Posterior vena cava (tissue), 2 donors: ENCODE measurements at regions of chr3 and their contacts with region 1.

Region 1: GRCh38 chr3:142578327-142579223 is at the start of gene ATR:
- DNase-seq: peak; percentile 99
- total RNA-seq, gene ATR: 20.2 to 20.3 TPM

Region 2: GRCh38 chr3:142716102-142716501 is 137.5 kb after region 1 on chr3:
- intact Hi-C with region 1: no loop called
- DNase-seq: no peak

Region 3: DNA sequence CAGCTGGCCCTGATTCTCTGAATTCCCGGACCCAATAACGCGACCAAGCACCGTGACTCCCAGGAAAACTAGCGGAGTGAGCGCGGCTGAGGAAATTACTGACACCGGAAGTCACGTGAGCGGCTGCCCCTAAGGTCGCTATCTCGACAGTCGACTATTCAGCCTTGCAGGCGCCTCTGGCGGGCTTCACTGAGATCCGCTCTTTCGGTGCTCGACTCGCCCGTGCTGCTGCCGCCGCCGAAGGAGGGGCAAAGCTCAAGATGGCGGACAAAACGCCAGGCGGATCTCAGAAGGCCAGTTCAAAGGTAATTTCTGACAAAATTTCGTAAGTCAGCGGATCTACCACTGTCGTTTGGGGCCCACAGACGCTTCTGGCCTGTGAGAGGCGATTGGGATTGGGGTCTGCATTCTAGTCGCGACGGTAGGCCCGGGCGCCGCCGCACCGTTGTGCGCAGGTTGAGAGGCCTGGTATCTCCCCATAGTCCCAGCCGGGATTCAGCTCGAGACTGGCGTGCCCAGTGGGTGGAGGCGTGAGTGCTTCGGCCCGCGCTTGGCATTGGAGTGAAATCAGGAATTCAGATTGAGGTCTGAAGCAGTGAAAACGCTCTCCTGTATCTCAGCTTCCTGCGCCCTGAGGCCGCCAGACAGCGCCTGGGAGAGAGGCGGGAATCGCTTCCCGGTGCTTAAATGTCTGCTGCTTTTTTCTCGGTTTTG is 423.0 kb after region 1 on chr3 and contains the start of gene U2SURP:
- intact Hi-C with region 1: loop called (anchors 10 kb)
- DNase-seq: peak; percentile 99
- total RNA-seq, gene U2SURP: 68.1 to 72.5 TPM